ENCODE measurements at regions of chr2 and their contacts with region 1.

Region 1: GRCh38 chr2:219160186-219161017 is at the start of gene NHEJ1:
- DNase-seq: peak; percentile 99
- ATAC-seq: peak; percentile 97
- H3K4me3 ChIP-seq: peak within 1 kb of the TSS; percentile 74
- H3K27ac ChIP-seq: peak within 1 kb of the TSS; percentile 89
- H3K4me1 ChIP-seq: peaks cover 7% of the 10 kb centered on the region
- H3K27me3 ChIP-seq: no peaks in the 10 kb centered on the region
- CTCF ChIP-seq: peak; percentile 99
- total RNA-seq, gene NHEJ1: 14.3 TPM

Region 2: DNA sequence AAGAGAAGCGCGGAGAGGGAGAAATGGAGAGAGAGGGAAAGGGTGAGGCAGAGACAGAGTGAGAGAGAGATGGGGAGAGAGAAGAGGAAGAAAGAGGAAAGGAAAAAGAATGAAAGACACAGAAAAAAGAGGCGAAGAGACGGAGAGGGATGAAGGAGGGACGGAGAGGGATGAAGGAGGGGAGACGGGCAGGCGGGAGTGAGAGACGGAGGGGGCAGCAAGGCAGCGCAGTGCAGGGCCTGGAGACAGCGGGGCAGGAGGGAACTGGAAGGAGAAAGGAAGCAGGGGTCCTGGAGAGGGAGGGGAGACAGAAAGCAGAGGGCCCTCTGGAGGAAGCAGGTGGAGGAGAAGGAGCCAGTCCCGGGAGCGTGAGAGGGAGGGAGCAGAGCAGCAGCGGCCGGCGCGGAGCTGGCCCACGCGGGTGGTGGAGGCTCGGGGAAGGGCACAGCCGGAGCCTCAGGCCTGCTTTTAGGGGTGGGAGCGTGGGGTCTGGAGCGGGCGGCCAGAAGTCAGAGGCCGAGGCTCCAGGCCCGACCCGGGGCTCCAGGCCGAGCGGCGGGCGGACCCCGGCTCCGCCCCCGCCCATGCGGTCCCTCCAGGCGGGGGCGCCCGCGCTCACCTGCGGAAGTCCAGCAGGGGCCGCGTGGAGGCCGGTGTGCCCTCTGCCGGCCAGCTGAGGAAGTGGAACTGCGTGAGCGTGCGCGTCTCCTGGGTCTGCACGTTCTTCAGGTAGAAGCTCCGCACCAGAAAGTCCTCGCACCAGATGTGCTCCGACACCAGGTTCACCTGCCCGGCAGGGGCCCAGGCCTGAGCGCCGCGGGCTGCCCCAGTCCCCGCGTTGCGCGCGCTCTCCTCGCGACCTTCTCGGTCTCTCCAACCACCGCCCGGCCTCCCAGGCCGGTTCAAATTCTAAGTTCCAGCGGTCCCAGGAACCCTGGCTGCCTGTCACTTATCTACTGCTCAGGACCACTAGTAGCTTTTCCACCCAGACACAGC is 134.3 kb after region 1 on chr2:
- intact Hi-C with region 1: loop called (anchors 5 kb)
- DNase-seq: peak; percentile 94
- ATAC-seq: peak; percentile 97
- H3K4me3 ChIP-seq: peak overlapping the region; percentile 53
- H3K27ac ChIP-seq: peak overlapping the region; percentile 59
- H3K4me1 ChIP-seq: peaks cover 12% of the 10 kb centered on the region
- H3K27me3 ChIP-seq: peaks cover 6% of the 10 kb centered on the region
- CTCF ChIP-seq: peak; percentile 99

Region 3: DNA sequence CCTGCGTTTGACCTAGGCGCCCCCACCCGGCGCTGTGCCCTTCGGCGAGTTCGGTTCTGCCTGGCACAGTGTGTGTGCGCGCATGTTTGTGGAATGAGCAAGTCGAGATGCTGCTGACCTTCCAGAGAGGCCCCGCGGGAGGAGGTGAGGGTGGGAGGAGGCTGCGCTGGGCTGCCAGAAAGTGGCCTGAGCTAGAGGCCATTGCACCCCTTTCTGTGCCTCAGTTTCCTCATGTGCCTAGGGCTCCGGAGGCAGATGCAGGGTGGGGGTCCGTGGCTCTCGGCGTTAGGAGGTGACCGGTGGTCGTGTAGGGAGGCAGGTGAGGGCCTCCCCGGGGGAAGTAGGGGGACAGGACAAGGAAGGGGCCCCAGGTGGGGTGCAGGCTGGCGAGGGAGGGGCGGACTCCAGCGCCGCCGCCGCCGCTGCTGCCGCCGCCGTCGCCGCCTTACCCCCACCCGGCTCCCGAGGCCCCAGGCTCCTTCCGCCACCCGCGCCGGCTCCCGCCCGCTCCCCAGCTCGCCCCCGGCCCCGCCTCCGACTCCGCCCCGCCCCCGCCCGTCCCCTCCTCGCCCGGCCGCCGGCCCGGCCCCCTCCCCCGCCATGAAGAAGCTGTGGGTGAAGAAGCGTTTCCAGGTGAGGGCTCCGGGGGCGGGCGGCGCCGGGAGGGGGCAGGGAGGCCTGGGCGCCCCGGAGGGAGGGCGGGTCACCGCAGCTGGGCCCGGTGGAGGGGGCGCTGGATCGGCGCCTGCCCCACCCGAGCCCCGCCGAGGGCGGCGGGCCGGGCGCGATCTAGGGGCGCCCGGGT is 281.3 kb after region 1 on chr2:
- intact Hi-C with region 1: no loop called
- DNase-seq: no peak
- ATAC-seq: peak; percentile 42
- H3K4me3 ChIP-seq: peak overlapping the region; percentile 40
- H3K27ac ChIP-seq: no peak overlapping the region
- H3K4me1 ChIP-seq: peaks cover 9% of the 10 kb centered on the region
- H3K27me3 ChIP-seq: peaks cover 24% of the 10 kb centered on the region
- CTCF ChIP-seq: no peak

Measured in upper lobe of right lung (tissue), 1 donor.